GM10248 (cell line): ENCODE measurements at regions of chr2 and their contacts with region 1.

Region 1: DNA sequence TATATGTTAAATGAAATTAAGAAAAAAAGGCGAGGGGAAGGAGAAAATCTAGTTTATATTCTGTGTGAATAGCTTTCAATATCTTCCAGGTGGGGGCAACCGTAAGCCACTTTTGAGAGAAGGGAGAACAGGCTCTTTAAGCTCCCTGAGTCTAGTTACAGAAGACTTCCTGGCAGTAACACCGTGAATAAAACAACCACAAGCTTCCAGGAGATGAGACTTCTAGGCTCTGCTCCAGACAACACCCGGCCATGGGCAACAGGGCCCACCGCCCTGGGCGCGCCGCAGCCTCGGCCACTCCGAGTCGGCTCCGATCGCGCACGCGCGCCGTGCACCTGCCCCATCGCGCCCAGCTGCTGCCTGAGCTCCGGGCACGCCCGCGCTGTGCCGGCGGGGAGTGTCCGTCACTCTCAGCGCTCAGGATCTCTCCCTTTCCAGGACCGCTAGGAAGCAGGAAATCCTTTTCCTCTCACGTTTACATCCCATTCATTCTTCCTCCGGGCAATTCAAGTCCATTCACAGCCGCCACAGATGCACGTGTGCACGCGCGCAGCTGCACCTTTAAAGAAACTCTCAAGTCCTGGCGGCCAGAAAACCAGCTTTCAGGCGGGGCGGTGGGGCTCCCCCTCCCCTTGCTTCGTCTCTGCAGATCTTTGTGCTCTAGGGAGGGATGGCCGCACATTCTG is 19.4 kb upstream of the PAX3 start:
- DNase-seq: peak; percentile 78
- CTCF ChIP-seq: peak; percentile 64

Region 2: GRCh38 chr2:222483513-222484039 is 165.4 kb after region 1 on chr2:
- CTCF ChIA-PET with region 1: interaction called, 20 read pairs
- POLR2A ChIA-PET with region 1: no interaction called
- DNase-seq: no peak
- CTCF ChIP-seq: peak; percentile 32

Region 3: DNA sequence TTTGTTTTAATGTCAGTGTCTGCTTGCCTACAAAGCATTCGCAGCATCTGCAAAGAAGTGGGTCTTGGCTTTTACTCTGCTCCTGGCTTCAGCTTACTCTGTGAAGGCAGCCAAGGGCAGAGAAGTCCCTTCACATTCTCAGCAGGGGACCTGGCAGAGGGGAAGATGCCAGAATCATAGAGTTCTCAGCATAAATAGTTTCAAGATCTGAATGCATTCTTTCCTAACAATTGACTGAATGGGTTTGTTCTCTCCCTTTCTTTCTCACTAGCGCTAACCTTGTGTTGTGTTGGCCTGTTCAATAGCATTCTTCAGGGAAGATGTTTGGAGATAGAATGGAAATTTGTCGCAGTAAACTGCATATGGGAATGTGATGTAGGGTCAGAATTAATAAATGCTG is 230.8 kb after region 1 on chr2:
- CTCF ChIA-PET with region 1: interaction called, 14 read pairs
- POLR2A ChIA-PET with region 1: no interaction called
- DNase-seq: no peak
- CTCF ChIP-seq: no peak

Region 4: GRCh38 chr2:222561817-222562645 is 243.9 kb after region 1 on chr2:
- CTCF ChIA-PET with region 1: interaction called, 155 read pairs
- POLR2A ChIA-PET with region 1: no interaction called
- DNase-seq: peak; percentile 73
- CTCF ChIP-seq: peak; percentile 61

Region 5: GRCh38 chr2:222582928-222583327 is 264.8 kb after region 1 on chr2:
- CTCF ChIA-PET with region 1: interaction called, 11 read pairs
- POLR2A ChIA-PET with region 1: no interaction called
- DNase-seq: no peak
- CTCF ChIP-seq: no peak